Prostate gland (tissue), 2 donors: ENCODE measurements at regions of chr14 and their contacts with region 1.

Region 1: GRCh38 chr14:21039585-21040369 is 2.4 kb upstream of the RNASE7 start:
- DNase-seq: peak; percentile 66
- H3K4me3 ChIP-seq: no peak overlapping the region
- H3K27ac ChIP-seq: peak overlapping the region; percentile 77 to 80
- H3K4me1 ChIP-seq: peaks cover 14% of the 10 kb centered on the region
- H3K27me3 ChIP-seq: no peaks in the 10 kb centered on the region
- CTCF ChIP-seq: peak; percentile 36 to 82 (median 74)
- POLR2A ChIP-seq: no peak

Region 2: DNA sequence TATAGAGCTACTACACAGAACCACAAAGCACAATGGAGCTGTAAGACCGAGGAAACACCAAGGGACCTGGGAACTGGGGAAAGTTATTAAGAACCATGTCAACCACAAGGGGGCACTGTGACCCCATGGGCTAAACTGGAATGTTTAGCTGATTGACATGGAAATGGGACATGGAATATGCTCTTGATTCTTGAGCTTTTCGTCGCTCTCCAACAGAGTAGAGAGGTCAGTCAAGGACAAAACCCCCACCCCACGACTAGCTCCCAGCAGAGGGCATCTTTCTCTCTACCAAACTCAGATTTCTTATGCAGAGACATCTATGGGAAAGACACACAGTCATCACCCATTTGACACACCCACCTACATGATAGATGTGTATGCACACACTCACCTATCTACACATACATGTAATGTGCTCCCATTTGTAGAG is 25.0 kb before region 1 on chr14:
- intact Hi-C with region 1: loop called (anchors 2 kb)
- DNase-seq: peak; percentile 87
- H3K4me3 ChIP-seq: no peak overlapping the region
- H3K27ac ChIP-seq: no peak overlapping the region
- H3K4me1 ChIP-seq: no peaks in the 10 kb centered on the region
- H3K27me3 ChIP-seq: no peaks in the 10 kb centered on the region
- CTCF ChIP-seq: peak; percentile 91 to 100 (median 94)
- POLR2A ChIP-seq: no peak

Region 3: DNA sequence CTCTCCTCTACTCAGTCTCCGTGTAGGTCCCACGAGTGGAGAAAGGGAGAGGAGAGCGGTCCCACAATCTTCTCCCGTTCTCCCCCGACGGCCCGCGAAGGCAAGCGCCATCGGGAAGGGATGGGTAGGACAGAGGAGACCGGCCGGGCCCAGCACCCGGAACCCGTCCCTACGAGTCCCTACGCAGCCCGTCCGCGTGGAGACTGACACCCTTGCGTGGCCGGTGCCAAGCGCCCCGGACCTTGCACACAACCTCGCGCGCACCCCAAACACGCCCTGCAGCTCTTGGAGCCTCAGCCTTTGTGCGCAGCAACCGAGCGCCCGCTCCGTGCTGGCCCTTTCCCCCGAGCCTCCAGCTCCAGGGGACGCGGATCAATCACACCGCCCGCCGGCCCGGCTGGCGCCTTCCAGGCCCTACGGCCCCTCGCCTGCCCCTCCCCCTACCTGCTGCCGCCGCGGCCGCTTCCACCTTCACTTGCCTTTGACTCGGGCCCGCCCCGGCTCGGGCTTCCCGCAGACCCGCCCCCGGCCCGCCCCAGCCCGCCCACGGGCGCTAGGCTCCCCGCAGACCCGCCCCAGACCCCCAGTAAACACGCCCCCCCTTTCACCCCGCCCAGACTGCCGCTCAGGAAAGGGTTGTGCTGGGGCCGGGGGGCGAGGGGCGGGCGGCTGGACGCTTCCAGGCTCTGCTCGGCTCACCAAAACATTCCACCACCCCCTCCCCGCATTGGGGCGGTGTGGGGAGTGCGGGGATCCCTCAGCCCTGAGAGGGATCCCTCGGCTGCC is 15.0 kb before region 1 on chr14 and contains the start of gene NDRG2:
- intact Hi-C with region 1: loop called (anchors 2 kb)
- DNase-seq: peak; percentile 84
- H3K4me3 ChIP-seq: peak within 1 kb of the TSS; percentile 70 to 84
- H3K27ac ChIP-seq: peak within 1 kb of the TSS; percentile 87 to 95
- H3K4me1 ChIP-seq: peaks cover 4% of the 10 kb centered on the region
- H3K27me3 ChIP-seq: no peaks in the 10 kb centered on the region
- CTCF ChIP-seq: peak in 1 of 4 experiments; percentile 8
- POLR2A ChIP-seq: peak; percentile 82
- total RNA-seq, gene NDRG2: 230 to 304 TPM